ENCODE measurements at regions of chr15 and their contacts with region 1.

Region 1: GRCh38 chr15:101167753-101168463 is 83.9 kb downstream of the CHSY1 start:
- DNase-seq: peak in 3 of 5 donors; percentile 49 to 60 (median 52)
- H3K4me3 ChIP-seq: no peak overlapping the region
- H3K27ac ChIP-seq: no peak overlapping the region
- H3K4me1 ChIP-seq: peaks cover 9% of the 10 kb centered on the region
- H3K27me3 ChIP-seq: no peaks in the 10 kb centered on the region
- CTCF ChIP-seq: no peak
- EP300 ChIP-seq: peak; percentile 84
- POLR2A ChIP-seq: no peak

Region 2: DNA sequence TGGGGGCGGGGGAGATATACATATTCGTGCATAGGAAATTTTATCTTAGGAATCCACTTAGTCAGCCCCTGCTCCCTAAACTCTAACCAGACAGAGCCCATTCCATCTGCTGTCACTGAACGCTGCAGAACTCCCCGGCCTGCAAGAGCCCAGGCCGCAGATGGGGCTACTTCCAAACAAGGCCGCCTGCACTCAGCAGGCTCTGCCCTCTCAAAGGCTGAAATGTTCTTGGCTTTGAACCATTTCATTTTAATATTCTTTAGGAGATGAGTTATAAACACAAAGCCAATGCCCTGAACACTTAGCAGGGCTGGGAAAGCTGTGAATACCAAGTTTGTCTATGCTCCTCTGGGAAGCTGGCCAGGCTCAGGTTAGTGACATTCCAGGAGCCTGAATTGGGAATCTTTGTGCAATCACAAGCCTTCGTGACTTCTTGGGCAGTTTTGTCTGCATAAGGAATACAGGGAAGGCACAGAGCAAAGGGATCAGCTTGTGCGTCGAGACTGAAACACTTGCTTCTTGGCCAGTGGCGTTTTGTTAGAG is 1998.1 kb before region 1 on chr15:
- intact Hi-C with region 1: loop called in 1 of 4 experiments (anchors 10 kb)
- DNase-seq: peak in 3 of 5 donors; percentile 28 to 42 (median 41)
- H3K4me3 ChIP-seq: no peak overlapping the region
- H3K27ac ChIP-seq: peak overlapping the region in 1 of 2 donors; percentile 28
- H3K4me1 ChIP-seq: peaks cover under 1% of the 10 kb centered on the region
- H3K27me3 ChIP-seq: no peaks in the 10 kb centered on the region
- CTCF ChIP-seq: no peak
- EP300 ChIP-seq: no peak
- POLR2A ChIP-seq: no peak

Region 3: GRCh38 chr15:100809151-100809550 is 358.8 kb before region 1 on chr15:
- intact Hi-C with region 1: no loop called
- DNase-seq: no peak
- H3K4me3 ChIP-seq: no peak overlapping the region
- H3K27ac ChIP-seq: no peak overlapping the region
- H3K4me1 ChIP-seq: no peaks in the 10 kb centered on the region
- H3K27me3 ChIP-seq: no peaks in the 10 kb centered on the region
- CTCF ChIP-seq: no peak
- EP300 ChIP-seq: no peak
- POLR2A ChIP-seq: no peak

Region 4: GRCh38 chr15:100918034-100918689 is 249.7 kb before region 1 on chr15:
- intact Hi-C with region 1: no loop called
- DNase-seq: peak; percentile 59 to 83 (median 76)
- H3K4me3 ChIP-seq: peak overlapping the region; percentile 50
- H3K27ac ChIP-seq: peak overlapping the region in 1 of 2 donors; percentile 83
- H3K4me1 ChIP-seq: peaks cover 5% of the 10 kb centered on the region
- H3K27me3 ChIP-seq: no peaks in the 10 kb centered on the region
- CTCF ChIP-seq: peak; percentile 79 to 89 (median 88)
- EP300 ChIP-seq: no peak
- POLR2A ChIP-seq: no peak

Region 5: DNA sequence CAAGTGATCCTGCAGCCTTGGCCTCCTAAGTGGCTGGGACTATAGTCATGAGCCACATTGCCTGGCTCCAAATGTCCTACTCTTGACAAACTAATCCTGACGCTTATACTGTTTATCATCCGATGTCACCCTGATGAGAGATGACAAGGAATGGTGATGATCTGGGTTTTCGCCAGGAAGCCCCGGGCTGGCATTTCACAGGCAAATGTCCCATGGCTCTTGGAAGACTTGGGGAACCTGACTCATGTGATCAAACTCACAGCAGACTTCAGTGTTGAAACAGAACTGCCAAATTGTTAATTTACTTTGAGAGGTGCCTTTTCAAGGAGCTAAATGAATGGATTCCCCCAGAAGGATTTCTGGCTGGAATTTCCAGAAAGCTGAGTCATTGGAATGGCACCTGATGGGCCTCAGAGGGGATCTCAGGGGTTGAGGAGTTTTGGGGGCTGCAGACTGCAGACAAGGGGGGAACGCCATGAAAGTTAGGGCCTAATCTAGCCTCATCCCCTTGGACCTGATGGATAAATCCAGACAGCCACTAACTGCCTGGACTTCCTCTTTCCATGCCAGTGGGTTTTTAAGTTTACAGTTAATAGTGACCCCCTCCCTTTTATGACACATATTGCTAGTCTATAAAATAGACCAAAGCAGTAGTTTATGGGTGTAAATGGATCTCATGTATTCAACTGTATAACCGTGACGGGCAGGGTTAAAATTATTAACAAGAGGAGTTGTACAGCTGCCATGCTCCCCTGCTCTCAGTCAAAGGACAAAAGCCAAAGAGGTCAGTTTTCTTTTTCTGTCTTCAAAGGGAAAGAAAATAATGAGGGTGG is 62.6 kb before region 1 on chr15:
- intact Hi-C with region 1: no loop called
- DNase-seq: no peak
- H3K4me3 ChIP-seq: no peak overlapping the region
- H3K27ac ChIP-seq: no peak overlapping the region
- H3K4me1 ChIP-seq: no peaks in the 10 kb centered on the region
- H3K27me3 ChIP-seq: no peaks in the 10 kb centered on the region
- CTCF ChIP-seq: no peak
- EP300 ChIP-seq: no peak
- POLR2A ChIP-seq: no peak

Region 6: DNA sequence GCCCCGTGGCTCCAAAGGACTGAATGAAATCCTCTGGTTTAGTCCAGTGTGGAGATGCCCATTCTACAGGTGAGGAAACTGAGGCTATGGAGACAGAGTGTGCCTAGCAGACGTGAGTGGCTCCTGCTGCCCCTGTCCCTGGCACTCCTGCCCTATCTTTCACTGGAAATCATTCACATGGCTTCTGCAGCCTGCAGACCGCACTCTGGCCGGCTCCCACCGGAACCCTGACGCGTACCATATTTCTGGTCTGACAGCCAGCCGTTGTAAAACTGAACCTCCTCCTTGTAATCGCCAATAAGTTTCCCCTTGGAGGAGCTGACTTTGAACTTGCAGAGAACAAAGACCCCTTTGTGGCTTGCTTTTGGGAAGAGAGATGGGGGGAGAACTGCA is 52.5 kb before region 1 on chr15:
- intact Hi-C with region 1: no loop called
- DNase-seq: peak in 2 of 5 donors; percentile 12 to 35
- H3K4me3 ChIP-seq: no peak overlapping the region
- H3K27ac ChIP-seq: no peak overlapping the region
- H3K4me1 ChIP-seq: peaks cover 1% of the 10 kb centered on the region
- H3K27me3 ChIP-seq: no peaks in the 10 kb centered on the region
- CTCF ChIP-seq: no peak
- EP300 ChIP-seq: no peak
- POLR2A ChIP-seq: no peak